CD8-positive, alpha-beta T cell (primary cell): ENCODE measurements at regions of chr13 and their contacts with region 1.

Region 1: GRCh38 chr13:30371649-30372265 is 50.5 kb upstream of the UBE2L5 start:
- DNase-seq: peak; percentile 39 to 90 (median 75)
- ATAC-seq: peak; percentile 55
- H3K4me3 ChIP-seq: peak overlapping the region; percentile 2 to 9
- H3K4me3 Mint-ChIP-seq: peak overlapping the region; percentile 67
- H3K27ac ChIP-seq: peak overlapping the region; percentile 53 to 66
- H3K27ac Mint-ChIP-seq: peak overlapping the region; percentile 94
- H3K4me1 ChIP-seq: peaks cover 77% of the 10 kb centered on the region
- H3K4me1 Mint-ChIP-seq: peaks cover 82% of the 10 kb centered on the region
- H3K27me3 ChIP-seq: no peaks in the 10 kb centered on the region
- H3K27me3 Mint-ChIP-seq: no peaks in the 10 kb centered on the region
- CTCF ChIP-seq: no peak

Region 2: GRCh38 chr13:30346153-30346788 is 25.5 kb before region 1 on chr13:
- CTCF ChIA-PET with region 1: interaction called, 4 read pairs
- POLR2A ChIA-PET with region 1: interaction called, 10 read pairs
- intact Hi-C with region 1: loop called in 1 of 2 experiments (anchors 2 kb)
- DNase-seq: peak; percentile 38 to 84 (median 65)
- ATAC-seq: peak; percentile 92
- H3K4me3 ChIP-seq: no peak overlapping the region
- H3K4me3 Mint-ChIP-seq: peak overlapping the region; percentile 38
- H3K27ac ChIP-seq: no peak overlapping the region
- H3K27ac Mint-ChIP-seq: peak overlapping the region; percentile 7
- H3K4me1 ChIP-seq: peaks cover 37% of the 10 kb centered on the region
- H3K4me1 Mint-ChIP-seq: peaks cover 40% of the 10 kb centered on the region
- H3K27me3 ChIP-seq: no peaks in the 10 kb centered on the region
- H3K27me3 Mint-ChIP-seq: no peaks in the 10 kb centered on the region
- CTCF ChIP-seq: no peak

Region 3: DNA sequence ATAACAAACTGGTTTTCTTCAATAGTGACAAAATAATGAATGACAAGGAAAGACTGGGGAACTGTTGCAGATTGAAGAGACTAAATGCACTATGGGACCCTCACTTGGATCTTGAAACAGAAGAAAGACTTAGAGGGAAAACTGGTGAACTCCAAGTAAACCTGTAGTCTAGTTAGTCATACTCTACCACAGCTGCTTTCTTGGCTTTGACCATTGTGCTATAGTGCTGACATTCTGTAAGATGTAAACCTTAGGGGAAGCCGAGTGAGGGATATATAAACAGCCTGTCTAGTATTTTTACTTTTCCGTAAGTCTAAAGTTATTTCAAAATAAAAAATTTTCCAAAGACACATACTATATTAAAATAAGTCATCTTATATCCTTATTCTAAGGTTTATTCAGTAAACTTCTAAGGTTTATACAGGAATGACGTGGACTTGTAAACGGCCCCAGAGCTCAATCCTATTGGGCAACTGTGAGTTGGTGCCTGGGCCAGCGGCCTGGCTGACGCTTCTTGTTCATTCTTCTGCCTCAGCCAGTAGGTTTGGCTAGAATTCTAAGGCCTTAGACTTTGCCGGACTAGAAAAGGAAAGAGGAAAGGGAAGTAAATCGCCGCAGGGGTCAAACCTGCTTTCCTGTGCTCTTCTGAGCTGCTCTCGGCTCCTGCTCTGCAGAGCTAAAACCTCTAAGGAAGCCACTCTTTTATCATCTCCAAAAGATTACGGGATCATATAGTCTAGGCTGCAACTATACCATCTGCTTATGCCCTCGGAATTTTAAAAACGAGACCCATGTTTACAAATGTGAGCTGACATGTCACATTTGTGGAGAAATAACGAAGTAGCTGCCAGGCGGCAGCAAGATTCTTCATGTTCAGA is 16.9 kb after region 1 on chr13:
- CTCF ChIA-PET with region 1: interaction called, 31 read pairs
- POLR2A ChIA-PET with region 1: interaction called, 131 read pairs
- intact Hi-C with region 1: no loop called
- DNase-seq: no peak
- ATAC-seq: no peak
- H3K4me3 ChIP-seq: peak overlapping the region in 1 of 2 experiments; percentile 38
- H3K4me3 Mint-ChIP-seq: peak overlapping the region; percentile 63
- H3K27ac ChIP-seq: peak overlapping the region in 1 of 2 experiments; percentile 11
- H3K27ac Mint-ChIP-seq: peak overlapping the region; percentile 72
- H3K4me1 ChIP-seq: peaks cover 25% of the 10 kb centered on the region
- H3K4me1 Mint-ChIP-seq: peaks cover 54% of the 10 kb centered on the region
- H3K27me3 ChIP-seq: no peaks in the 10 kb centered on the region
- H3K27me3 Mint-ChIP-seq: no peaks in the 10 kb centered on the region
- CTCF ChIP-seq: no peak

Region 4: GRCh38 chr13:30408319-30409101 is 36.8 kb after region 1 on chr13:
- CTCF ChIA-PET with region 1: interaction called, 7 read pairs
- POLR2A ChIA-PET with region 1: interaction called, 14 read pairs
- intact Hi-C with region 1: loop called in 1 of 2 experiments (anchors 1 kb)
- DNase-seq: peak; percentile 82 to 94 (median 90)
- ATAC-seq: peak; percentile 94
- H3K4me3 ChIP-seq: peak overlapping the region; percentile 31 to 39
- H3K4me3 Mint-ChIP-seq: peak overlapping the region; percentile 72
- H3K27ac ChIP-seq: peak overlapping the region in 1 of 2 experiments; percentile 67
- H3K27ac Mint-ChIP-seq: peak overlapping the region; percentile 86
- H3K4me1 ChIP-seq: peaks cover 14% of the 10 kb centered on the region
- H3K4me1 Mint-ChIP-seq: peaks cover 27% of the 10 kb centered on the region
- H3K27me3 ChIP-seq: no peaks in the 10 kb centered on the region
- H3K27me3 Mint-ChIP-seq: no peaks in the 10 kb centered on the region
- CTCF ChIP-seq: peak; percentile 74

Region 5: GRCh38 chr13:30673669-30674521 is 302.1 kb after region 1 on chr13:
- CTCF ChIA-PET with region 1: no interaction called
- POLR2A ChIA-PET with region 1: no interaction called
- intact Hi-C with region 1: loop called in 1 of 2 experiments (anchors 10 kb)
- DNase-seq: peak; percentile 82 to 95 (median 87)
- ATAC-seq: peak; percentile 91
- H3K4me3 ChIP-seq: peak overlapping the region; percentile 63
- H3K4me3 Mint-ChIP-seq: peak overlapping the region; percentile 88
- H3K27ac ChIP-seq: peak overlapping the region; percentile 44 to 68
- H3K27ac Mint-ChIP-seq: peak overlapping the region; percentile 92
- H3K4me1 ChIP-seq: peaks cover 7% of the 10 kb centered on the region
- H3K4me1 Mint-ChIP-seq: peaks cover 25% of the 10 kb centered on the region
- H3K27me3 ChIP-seq: no peaks in the 10 kb centered on the region
- H3K27me3 Mint-ChIP-seq: no peaks in the 10 kb centered on the region
- CTCF ChIP-seq: no peak